Activated naive CD8-positive, alpha-beta T cell treated with anti-CD3 and anti-CD28 coated beads, Interleukin-2, amount 10 ng/mL, durations not matched to agents 7 days and 5 days (primary cell): ENCODE measurements at regions of chr11 and their contacts with region 1.

Region 1: DNA sequence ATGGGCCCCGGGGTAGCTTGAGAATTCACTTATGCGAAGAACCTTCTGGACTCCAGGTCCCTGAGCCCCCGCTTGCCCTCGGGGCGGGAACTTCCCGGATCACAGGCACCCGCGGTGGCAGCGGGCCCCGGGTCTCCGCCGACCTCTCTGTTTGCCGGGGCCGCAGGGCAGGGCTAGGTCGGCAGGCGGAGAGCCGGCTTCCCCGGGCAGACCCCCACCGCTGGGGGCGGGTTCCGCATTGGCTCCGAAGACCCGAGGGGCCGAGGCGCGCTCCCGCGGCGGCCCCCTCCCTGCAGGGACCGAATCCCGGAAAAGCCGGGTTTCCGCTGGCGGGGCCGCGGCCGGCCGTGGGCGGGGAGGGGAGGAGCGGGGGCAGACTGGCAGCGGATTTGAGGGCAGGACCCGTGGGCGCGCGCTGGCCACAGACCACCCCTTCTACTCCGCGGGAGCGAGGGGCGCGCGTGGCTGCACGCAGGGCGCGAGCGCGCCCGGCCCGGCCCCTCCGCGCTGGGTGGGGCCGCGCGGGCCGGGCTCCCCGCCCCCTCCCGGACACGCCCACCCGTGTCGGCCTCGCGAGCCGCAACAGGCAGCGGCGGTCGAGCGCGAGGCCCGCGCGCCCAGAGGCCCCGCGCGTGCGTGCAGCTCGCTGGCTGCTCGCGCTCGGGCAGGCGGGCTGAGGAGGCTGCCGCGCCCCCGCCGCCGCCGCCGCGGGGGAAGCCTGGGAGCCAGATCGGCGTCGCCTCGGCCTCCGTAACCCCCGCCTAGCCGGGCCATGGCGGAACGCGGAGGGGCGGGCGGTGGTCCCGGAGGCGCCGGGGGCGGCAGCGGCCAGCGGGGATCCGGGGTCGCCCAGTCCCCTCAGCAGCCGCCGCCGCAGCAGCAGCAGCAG is at the start of gene PACS1:
- DNase-seq: peak; percentile 89
- ATAC-seq: peak; percentile 68
- H3K4me3 Mint-ChIP-seq: peak within 1 kb of the TSS; percentile 88
- H3K27ac Mint-ChIP-seq: peak within 1 kb of the TSS; percentile 88
- H3K4me1 Mint-ChIP-seq: peaks cover 54% of the 10 kb centered on the region
- H3K27me3 Mint-ChIP-seq: no peaks in the 10 kb centered on the region
- total RNA-seq, gene PACS1: 138 to 162 TPM

Region 2: GRCh38 chr11:65953513-65953912 is 116.4 kb before region 1 on chr11:
- POLR2A ChIA-PET with region 1: no interaction called
- DNase-seq: no peak
- ATAC-seq: no peak
- H3K4me3 Mint-ChIP-seq: no peak overlapping the region
- H3K27ac Mint-ChIP-seq: no peak overlapping the region
- H3K4me1 Mint-ChIP-seq: peaks cover 13% of the 10 kb centered on the region
- H3K27me3 Mint-ChIP-seq: peaks cover 5% of the 10 kb centered on the region

Region 3: GRCh38 chr11:66022401-66023185 is 47.4 kb before region 1 on chr11:
- POLR2A ChIA-PET with region 1: no interaction called
- DNase-seq: peak; percentile 91
- ATAC-seq: peak; percentile 89
- H3K4me3 Mint-ChIP-seq: peak overlapping the region; percentile 55
- H3K27ac Mint-ChIP-seq: peak overlapping the region; percentile 24
- H3K4me1 Mint-ChIP-seq: peaks cover 8% of the 10 kb centered on the region
- H3K27me3 Mint-ChIP-seq: peaks cover 5% of the 10 kb centered on the region

Region 4: DNA sequence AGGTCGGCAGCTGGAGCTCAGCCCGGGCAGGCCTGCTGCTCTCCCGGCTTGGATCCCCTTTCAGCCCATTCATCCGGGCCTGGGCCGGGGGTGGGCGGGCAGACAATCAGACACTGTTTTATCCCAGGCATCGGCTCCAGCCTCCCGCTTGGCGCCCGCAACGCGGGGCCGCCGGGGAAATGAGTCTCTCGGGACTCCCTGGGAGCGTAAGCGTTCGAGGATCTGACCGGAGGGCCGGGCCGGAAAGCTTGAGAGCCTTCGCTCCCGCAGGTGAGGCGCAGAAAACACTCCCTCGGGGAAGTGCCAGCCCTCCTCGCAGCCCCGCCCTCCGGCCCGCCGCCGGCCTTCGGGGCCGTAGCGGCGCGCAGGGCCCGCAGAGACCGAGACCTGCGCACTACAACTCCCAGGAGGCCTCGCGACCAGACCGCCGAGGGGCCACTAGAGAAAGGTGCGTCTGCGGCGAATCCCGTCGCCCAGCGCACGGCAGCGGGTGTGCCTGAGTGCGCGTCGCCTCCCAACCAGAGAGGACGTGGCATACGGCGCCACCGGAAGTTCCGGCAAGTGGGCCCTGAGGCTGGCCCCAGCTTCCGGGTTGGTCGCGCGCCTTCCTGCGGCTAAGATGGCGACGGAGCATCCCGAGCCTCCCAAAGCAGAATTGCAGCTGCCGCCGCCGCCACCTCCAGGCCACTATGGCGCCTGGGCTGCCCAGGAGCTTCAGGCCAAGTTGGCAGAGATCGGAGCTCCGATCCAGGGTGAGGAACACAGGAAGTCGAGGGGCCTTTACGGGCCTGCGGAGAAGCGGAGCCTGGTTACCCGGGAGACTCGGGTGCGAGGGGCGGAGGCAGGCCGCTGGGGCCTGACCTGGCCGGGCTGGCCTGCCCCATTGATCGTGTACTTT is 17.9 kb before region 1 on chr11 and contains the start of gene SF3B2:
- POLR2A ChIA-PET with region 1: interaction called, 62 read pairs
- DNase-seq: peak; percentile 96
- ATAC-seq: peak; percentile 99
- H3K4me3 Mint-ChIP-seq: peak within 1 kb of the TSS; percentile 99
- H3K27ac Mint-ChIP-seq: peak within 1 kb of the TSS; percentile 92
- H3K4me1 Mint-ChIP-seq: peaks cover 28% of the 10 kb centered on the region
- H3K27me3 Mint-ChIP-seq: peaks cover 10% of the 10 kb centered on the region
- total RNA-seq, gene SF3B2: 231 to 246 TPM

Region 5: DNA sequence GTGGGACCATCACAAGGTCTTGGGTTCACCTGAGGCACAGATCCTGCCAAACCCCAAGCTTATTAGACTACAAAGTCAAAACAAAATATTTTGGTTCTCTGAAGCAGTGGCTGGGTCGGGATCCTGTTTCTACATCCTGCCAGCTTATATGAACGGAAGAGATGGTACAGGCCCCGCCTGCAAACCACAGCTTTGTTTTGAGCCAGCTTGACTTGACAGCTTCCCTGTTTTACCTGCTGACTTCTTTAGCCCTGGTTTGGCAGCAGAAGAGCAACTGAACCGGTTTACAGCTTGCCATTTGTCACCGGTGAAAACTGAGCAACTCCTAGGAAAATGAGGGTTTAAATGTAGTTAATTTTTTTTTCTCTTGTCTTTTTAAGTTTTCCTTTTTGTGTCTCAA is 11.5 kb after region 1 on chr11:
- POLR2A ChIA-PET with region 1: interaction called, 36 read pairs
- DNase-seq: peak; percentile 63
- ATAC-seq: peak; percentile 97
- H3K4me3 Mint-ChIP-seq: peak overlapping the region; percentile 91
- H3K27ac Mint-ChIP-seq: peak overlapping the region; percentile 99
- H3K4me1 Mint-ChIP-seq: peaks cover 57% of the 10 kb centered on the region
- H3K27me3 Mint-ChIP-seq: no peaks in the 10 kb centered on the region

Region 6: DNA sequence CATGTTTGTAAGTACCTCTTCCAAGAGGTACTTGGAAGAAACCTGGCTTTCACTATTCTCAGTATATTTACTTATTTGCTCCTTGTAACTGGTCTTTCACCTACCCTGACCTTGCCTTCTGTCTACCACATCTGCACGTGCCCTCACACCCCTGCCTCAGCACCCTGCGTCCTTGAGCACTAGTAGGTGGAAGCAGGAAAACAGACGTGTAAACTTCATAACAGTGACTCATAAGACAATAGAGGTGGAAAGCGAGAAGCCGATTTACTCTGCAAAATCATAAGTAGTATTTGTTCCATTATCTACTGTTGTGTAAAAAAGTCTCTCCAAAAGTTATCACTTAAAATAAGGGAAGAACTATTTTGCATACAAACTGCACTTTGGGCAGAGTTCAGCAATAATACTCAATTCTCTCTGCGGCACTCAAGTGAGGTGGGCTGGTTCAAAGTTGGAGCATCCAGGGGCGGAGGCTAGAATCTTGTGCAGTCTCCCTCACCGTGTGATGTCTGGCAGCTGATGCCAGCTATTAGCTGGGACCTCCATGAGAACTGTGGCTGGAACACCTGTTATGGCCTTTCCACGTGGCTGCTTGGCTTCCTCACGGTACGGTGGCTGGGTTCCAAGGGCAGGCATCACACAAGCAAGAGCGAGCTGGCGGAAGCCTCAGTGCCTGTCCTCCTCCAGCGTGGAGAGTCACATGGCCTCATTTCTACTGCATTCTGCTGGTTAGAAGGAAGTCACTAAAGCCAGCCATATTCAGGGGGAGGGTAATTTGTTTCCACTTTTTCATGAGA is 30.5 kb after region 1 on chr11:
- POLR2A ChIA-PET with region 1: interaction called, 31 read pairs
- DNase-seq: peak; percentile 71
- ATAC-seq: peak; percentile 97
- H3K4me3 Mint-ChIP-seq: peak overlapping the region; percentile 76
- H3K27ac Mint-ChIP-seq: peak overlapping the region; percentile 86
- H3K4me1 Mint-ChIP-seq: peaks cover 41% of the 10 kb centered on the region
- H3K27me3 Mint-ChIP-seq: no peaks in the 10 kb centered on the region

Region 7: GRCh38 chr11:66112601-66113098 is 42.7 kb after region 1 on chr11:
- POLR2A ChIA-PET with region 1: interaction called, 31 read pairs
- DNase-seq: no peak
- ATAC-seq: no peak
- H3K4me3 Mint-ChIP-seq: peak overlapping the region; percentile 25
- H3K27ac Mint-ChIP-seq: peak overlapping the region; percentile 73
- H3K4me1 Mint-ChIP-seq: peaks cover 78% of the 10 kb centered on the region
- H3K27me3 Mint-ChIP-seq: no peaks in the 10 kb centered on the region

Region 8: DNA sequence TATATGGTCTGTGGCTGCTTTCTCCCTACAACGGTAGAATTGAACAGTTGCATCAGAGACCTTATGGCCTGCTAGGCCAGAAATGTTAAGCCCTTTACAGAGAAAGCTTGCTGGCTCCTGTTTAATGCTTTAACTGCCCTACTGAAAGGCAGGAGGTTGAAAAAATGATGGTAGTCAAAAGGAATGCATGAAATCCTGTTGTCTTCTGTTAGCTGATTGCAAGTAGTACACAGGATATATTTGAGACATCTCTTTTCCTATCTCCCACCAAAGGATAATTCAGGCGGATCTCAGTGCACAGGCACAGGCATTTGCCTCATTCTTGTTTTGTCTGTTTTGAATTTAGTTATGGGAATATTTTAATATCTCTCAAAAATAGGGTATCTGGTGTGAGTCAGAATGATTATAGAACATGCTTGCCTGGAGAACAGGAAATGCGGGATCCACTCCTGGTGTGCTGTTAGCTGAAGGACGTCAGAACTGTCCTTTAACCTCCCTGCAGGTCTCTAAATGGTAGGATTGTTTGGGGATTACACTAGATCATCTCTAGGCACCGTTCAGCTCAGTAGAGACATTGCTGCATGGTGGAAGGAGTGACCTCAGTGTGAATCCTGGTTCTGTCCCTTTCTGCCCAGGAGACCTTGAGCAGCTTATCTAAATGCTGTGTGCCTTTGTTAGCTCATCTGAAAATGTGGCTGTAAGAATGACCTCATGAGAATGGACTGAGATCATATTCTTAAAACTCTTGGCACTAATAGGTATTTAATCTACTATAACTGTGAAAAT is 49.6 kb after region 1 on chr11:
- POLR2A ChIA-PET with region 1: interaction called, 31 read pairs
- DNase-seq: no peak
- ATAC-seq: no peak
- H3K4me3 Mint-ChIP-seq: no peak overlapping the region
- H3K27ac Mint-ChIP-seq: no peak overlapping the region
- H3K4me1 Mint-ChIP-seq: peaks cover 68% of the 10 kb centered on the region
- H3K27me3 Mint-ChIP-seq: no peaks in the 10 kb centered on the region

Region 9: GRCh38 chr11:66126808-66127555 is 57.0 kb after region 1 on chr11:
- POLR2A ChIA-PET with region 1: interaction called, 10 read pairs
- DNase-seq: peak; percentile 47
- ATAC-seq: peak; percentile 92
- H3K4me3 Mint-ChIP-seq: peak overlapping the region; percentile 79
- H3K27ac Mint-ChIP-seq: peak overlapping the region; percentile 96
- H3K4me1 Mint-ChIP-seq: peaks cover 54% of the 10 kb centered on the region
- H3K27me3 Mint-ChIP-seq: no peaks in the 10 kb centered on the region